Activated CD8-positive, alpha-beta memory T cell treated with anti-CD3 and anti-CD28 coated beads, Interleukin-2, amount 10 ng/mL, durations not matched to agents 7 days and 5 days (primary cell): ENCODE measurements at regions of chr20 and their contacts with region 1.

Region 1: DNA sequence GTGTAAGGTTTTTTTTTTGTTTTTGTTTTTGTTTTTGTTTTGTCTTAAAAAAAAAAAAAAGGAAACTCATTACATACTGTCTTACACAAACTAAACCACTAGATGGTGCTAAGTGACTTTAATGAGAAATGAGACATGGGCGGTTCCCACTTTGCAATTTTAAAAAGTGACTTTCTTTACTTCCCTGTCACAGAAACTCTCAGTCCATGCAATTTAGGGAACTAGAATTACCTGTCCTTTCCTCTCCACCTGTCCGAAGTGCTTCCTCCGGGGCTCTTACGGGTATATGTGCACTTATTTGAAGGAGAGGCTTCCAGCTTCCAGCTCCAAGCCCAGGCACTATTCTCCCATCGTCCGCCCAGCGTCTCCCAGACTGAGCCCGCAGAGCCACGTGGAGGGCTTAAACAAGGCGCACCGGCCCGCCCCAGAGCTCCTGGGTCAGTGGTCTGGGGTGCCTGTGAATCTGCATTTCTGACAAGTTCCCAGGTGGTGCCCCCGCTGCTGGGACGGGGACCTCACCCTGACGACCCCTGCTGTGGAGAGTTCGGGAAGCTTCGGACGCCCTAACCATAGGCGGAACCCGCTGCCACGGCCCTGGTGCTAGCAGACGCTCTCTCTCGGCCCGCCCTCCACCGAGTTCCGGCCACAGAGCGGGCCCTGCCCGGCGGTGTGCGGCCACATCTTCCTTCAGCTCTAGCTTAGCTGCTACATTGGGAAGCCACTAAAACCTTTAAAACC is 26.1 kb downstream of the BFSP1 start:
- DNase-seq: peak; percentile 89
- ATAC-seq: peak; percentile 75
- H3K4me3 Mint-ChIP-seq: peak overlapping the region; percentile 78
- H3K27ac Mint-ChIP-seq: peak overlapping the region; percentile 96
- H3K4me1 Mint-ChIP-seq: peaks cover 60% of the 10 kb centered on the region
- H3K27me3 Mint-ChIP-seq: peaks cover 2% of the 10 kb centered on the region

Region 2: GRCh38 chr20:17536944-17537444 is 31.9 kb after region 1 on chr20:
- CTCF ChIA-PET with region 1: interaction called, 37 read pairs
- DNase-seq: peak; percentile 83
- ATAC-seq: peak; percentile 95
- H3K4me3 Mint-ChIP-seq: no peak overlapping the region
- H3K27ac Mint-ChIP-seq: no peak overlapping the region
- H3K4me1 Mint-ChIP-seq: peaks cover 38% of the 10 kb centered on the region
- H3K27me3 Mint-ChIP-seq: peaks cover 31% of the 10 kb centered on the region

Region 3: DNA sequence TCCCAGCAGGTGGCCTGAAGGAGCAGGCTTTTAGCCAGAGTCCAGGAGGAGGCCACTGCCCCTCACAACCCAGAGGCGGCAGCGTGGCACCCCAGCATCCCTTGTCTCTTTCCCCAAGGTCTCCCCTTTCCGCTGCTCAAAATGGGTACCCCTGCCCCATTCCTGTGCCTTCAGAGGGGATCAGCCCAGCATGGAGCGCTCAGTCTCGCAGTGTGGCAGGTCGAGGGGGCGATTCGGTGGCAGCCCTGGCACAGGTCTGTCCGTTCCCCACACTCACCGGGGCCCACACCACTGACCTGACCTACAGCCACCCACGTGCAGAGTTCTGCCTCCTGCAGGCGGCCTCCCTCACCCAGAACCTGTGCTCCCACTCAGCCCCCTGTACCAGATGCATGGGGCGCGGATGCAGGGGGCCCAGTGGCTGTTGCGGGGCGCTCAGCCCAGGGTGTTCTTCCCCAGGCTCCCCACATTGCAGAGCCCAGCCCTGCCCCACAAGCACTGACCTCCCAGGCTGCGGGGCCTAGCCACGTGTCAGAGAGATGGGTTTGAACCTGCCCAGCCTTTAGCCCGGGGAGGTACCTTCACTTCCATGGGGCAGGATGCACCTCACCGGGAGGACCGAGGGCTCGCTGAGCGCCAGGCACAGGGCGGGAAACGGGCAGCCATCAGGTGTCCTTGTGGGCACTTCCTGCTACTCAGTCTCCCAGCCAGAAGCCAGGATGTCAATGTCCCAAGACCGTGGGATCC is 106.6 kb after region 1 on chr20:
- CTCF ChIA-PET with region 1: interaction called, 31 read pairs
- DNase-seq: peak; percentile 58
- ATAC-seq: no peak
- H3K4me3 Mint-ChIP-seq: peak overlapping the region; percentile 60
- H3K27ac Mint-ChIP-seq: peak overlapping the region; percentile 96
- H3K4me1 Mint-ChIP-seq: peaks cover 47% of the 10 kb centered on the region
- H3K27me3 Mint-ChIP-seq: no peaks in the 10 kb centered on the region

Region 4: DNA sequence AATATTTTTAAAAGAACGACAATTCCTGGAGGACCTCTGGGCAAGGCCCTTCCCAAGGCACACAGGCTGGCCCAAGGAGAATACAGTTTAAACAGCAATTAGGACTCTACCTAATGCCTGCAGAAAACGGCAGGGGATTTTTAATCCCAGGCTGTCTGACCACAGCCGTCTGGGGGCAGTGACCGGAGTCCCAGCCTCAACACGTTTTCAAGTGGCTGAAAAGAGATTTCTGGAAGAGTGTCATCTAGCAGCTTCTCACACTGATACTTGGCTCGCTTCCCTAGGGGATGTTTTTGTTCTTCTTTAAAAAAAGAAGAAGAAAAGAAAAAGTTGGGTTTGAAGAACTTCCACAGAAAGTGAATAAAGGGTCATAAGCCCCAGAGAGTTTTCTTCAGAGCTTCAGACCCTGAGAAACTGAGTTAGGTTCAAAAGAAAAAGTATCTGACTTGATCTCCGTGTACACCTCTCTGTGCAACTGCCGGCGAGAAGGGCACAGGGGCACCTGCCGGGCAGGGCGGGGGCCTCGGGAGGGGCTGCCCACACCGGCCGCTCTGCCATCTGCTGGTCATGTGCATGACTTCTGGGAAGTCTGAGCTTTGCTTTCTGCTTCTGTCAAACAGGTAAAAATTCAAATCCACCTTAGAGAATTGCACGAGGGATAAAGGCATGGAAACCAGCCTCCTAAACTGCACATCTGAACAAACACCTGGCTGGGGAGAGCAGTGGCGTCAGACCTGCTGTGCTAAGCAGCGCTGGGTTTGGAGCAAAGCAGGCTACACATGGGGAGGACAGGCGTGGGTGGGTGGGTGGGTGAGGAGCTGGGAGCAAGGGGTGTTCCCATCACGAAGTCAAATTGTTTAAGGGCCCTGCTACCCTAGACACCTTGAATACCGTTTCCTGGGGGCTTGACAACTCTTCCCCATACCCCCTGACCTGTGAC is 144.0 kb after region 1 on chr20:
- CTCF ChIA-PET with region 1: interaction called, 11 read pairs
- DNase-seq: no peak
- ATAC-seq: peak; percentile 42
- H3K4me3 Mint-ChIP-seq: no peak overlapping the region
- H3K27ac Mint-ChIP-seq: no peak overlapping the region
- H3K4me1 Mint-ChIP-seq: peaks cover 16% of the 10 kb centered on the region
- H3K27me3 Mint-ChIP-seq: no peaks in the 10 kb centered on the region

Region 5: DNA sequence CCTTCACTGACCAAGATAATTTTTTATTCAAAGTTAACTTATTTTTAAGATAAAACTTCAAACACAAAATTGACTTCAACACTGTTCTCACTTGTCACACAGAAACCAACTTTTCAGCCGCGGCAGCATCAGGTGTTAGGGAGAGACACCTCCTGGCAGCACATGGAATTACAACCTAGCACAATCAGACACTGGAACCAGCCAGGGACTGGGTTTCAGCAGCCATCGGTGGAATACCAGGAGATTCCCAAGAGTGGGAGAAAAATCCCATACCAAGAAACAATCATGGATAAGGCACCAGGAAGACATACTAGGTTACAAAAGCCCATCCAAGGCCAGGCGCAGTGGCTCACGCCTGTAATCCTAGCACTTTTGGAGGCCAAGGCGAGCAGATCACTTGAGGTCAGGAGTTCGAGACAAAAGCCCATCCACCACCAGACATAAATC is 393.5 kb after region 1 on chr20:
- CTCF ChIA-PET with region 1: interaction called, 18 read pairs
- DNase-seq: peak; percentile 79
- ATAC-seq: peak; percentile 81
- H3K4me3 Mint-ChIP-seq: no peak overlapping the region
- H3K27ac Mint-ChIP-seq: no peak overlapping the region
- H3K4me1 Mint-ChIP-seq: peaks cover 39% of the 10 kb centered on the region
- H3K27me3 Mint-ChIP-seq: peaks cover 48% of the 10 kb centered on the region